Activated CD4-positive, alpha-beta memory T cell treated with anti-CD3 and anti-CD28 coated beads for 36 hours (primary cell): ENCODE measurements at regions of chr9 and their contacts with region 1.

Region 1: GRCh38 chr9:128034821-128035764 is 32.0 kb downstream of the NAIF1 start:
- DNase-seq: peak; percentile 75
- H3K4me3 Mint-ChIP-seq: peak overlapping the region; percentile 35
- H3K27ac Mint-ChIP-seq: peak overlapping the region; percentile 23
- H3K4me1 Mint-ChIP-seq: peaks cover 38% of the 10 kb centered on the region
- H3K27me3 Mint-ChIP-seq: peaks cover 2% of the 10 kb centered on the region

Region 2: DNA sequence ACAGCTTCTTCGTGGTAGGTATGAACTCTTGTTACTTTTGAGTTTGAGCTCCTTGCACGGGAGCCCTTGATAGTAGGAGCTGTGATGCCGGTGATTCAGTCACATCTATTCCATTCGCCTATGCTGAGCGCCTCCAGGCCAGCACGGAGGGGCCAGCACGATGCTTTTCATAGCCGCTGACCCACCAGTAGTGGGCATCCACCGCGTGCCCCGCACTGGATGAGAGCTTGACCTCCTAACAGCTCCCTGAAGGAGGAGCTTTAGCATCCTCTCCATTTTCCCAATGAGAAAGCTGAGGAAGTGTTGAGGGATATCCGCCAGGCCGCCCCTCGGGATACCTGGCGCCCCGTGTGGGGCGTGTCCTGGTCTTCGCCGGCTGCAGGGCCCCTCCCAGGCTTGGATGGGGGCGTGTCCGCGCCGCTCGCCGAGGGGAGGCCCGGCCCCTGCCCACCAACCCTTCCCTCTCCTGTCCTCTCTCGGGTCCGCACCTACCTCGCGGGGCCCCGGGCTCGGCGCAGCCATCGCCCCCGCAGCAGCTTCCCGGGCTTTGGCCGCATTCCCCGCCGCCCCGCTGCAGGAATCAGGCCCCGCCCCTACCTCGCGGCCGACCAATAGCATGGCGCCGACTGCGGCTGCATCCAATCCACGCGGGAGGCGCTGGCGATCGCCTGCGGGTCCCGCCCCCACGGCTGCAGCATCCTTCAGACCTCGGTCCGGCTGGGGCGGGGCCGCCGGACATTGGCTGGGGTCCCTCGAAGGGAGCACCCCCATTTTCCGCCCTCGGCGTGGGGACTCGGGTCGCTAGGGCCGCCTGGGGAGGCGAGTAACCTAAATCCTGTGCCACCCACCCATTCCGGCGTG is 104.6 kb before region 1 on chr9 and contains the start of gene PIP5KL1:
- CTCF ChIA-PET with region 1: interaction called, 347 read pairs
- POLR2A ChIA-PET with region 1: no interaction called
- intact Hi-C with region 1: no loop called
- DNase-seq: peak; percentile 79
- H3K4me3 Mint-ChIP-seq: peak within 1 kb of the TSS; percentile 48
- H3K27ac Mint-ChIP-seq: no peak within 1 kb of the TSS
- H3K4me1 Mint-ChIP-seq: peaks cover 32% of the 10 kb centered on the region
- H3K27me3 Mint-ChIP-seq: peaks cover 1% of the 10 kb centered on the region
- total RNA-seq, gene PIP5KL1: 0.94 to 2.9 TPM

Region 3: DNA sequence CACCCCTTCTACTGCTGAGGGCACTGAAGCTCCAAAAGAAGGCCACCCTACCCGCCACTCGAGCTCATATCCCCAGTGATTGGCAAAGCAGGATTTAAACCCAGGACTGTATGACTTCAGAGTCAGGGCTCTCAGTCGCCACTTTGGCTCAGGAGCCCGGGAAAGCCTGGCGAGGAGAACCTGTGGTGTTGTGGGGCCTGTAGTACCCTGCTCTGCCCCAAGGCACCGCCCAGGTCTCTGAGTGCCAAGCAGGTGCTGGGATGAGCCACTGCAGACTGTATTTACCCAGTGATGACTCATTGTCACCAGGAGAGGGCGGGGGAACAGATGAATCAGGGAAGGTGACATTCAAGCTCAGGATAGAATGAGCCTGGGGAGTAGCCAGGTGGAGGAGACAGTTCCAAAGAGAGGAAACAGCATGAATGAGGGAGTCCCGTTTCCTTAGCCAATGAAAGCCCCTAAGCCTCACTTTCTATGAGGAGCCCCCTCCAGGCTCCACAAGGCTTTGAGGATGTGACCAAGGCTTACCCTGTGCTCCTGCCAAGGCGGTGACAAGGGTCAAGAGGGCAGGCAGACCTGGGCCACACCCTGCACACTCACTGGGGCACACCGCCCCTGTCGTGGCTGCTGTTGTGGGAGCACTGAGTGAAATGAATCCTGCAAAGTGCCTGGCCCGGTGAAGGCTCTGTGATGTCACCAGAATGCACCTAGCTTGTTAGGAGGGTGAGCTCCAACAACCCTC is 79.6 kb before region 1 on chr9:
- CTCF ChIA-PET with region 1: interaction called, 142 read pairs
- POLR2A ChIA-PET with region 1: interaction called, 3 read pairs
- intact Hi-C with region 1: loop called (anchors 1 kb)
- DNase-seq: peak; percentile 95
- H3K4me3 Mint-ChIP-seq: peak overlapping the region; percentile 30
- H3K27ac Mint-ChIP-seq: peak overlapping the region; percentile 92
- H3K4me1 Mint-ChIP-seq: peaks cover 80% of the 10 kb centered on the region
- H3K27me3 Mint-ChIP-seq: no peaks in the 10 kb centered on the region

Region 4: GRCh38 chr9:127980706-127981558 is 54.2 kb before region 1 on chr9 and contains the start of gene EEIG1:
- CTCF ChIA-PET with region 1: interaction called, 76 read pairs
- POLR2A ChIA-PET with region 1: interaction called, 8 read pairs
- intact Hi-C with region 1: loop called (anchors 1 kb)
- DNase-seq: peak; percentile 98
- H3K4me3 Mint-ChIP-seq: peak within 1 kb of the TSS; percentile 96
- H3K27ac Mint-ChIP-seq: peak within 1 kb of the TSS; percentile 93
- H3K4me1 Mint-ChIP-seq: peaks cover 43% of the 10 kb centered on the region
- H3K27me3 Mint-ChIP-seq: no peaks in the 10 kb centered on the region
- total RNA-seq, gene EEIG1: 50.7 to 58.0 TPM

Region 5: GRCh38 chr9:128078504-128079434 is 43.7 kb after region 1 on chr9:
- CTCF ChIA-PET with region 1: interaction called, 15 read pairs
- POLR2A ChIA-PET with region 1: no interaction called
- intact Hi-C with region 1: no loop called
- DNase-seq: no peak
- H3K4me3 Mint-ChIP-seq: no peak overlapping the region
- H3K27ac Mint-ChIP-seq: peak overlapping the region; percentile 70
- H3K4me1 Mint-ChIP-seq: peaks cover 44% of the 10 kb centered on the region
- H3K27me3 Mint-ChIP-seq: no peaks in the 10 kb centered on the region

Region 6: DNA sequence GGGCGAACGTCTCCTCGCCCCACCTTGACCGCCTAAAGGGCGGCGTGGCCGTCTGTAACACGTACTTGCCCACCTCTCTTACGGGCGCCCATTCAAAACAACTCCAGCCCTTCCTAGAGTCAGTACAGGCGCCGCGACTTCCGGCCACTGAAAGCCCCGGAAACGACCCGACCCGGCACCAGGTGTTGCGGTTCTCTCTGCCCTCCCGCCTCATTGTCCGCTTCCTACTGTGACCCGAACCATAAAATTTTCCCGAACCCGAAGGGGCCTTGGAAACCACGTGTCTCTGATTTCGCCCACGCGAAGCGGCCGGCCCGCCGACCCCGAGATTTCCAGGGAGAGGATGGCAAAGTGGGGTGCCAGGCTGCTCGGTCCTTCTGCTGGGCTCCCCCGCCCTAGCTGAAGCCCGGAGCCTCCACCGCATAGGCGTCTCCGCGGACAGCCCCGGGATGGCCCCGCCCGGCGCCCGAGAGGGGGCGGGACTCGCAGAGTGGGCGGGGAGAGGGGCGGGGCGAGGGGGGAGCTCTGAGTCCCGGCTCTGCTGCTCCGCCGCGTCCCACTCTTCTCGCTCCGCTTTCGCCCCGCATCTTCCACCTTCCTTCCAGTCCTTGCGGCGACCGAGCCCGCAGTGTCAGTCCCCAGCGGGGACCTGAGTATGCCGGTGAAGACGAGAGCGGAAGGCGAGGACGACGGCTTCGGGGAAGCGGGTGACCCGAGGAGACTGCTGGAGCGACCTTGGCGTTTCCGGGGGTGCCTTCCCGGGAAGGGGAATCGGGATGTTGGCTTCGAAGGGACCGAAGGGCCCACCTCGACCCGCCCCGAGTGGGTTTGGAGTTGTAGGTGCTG is 93.1 kb after region 1 on chr9:
- CTCF ChIA-PET with region 1: interaction called, 11 read pairs
- POLR2A ChIA-PET with region 1: no interaction called
- intact Hi-C with region 1: no loop called
- DNase-seq: peak; percentile 88
- H3K4me3 Mint-ChIP-seq: peak overlapping the region; percentile 96
- H3K27ac Mint-ChIP-seq: peak overlapping the region; percentile 89
- H3K4me1 Mint-ChIP-seq: peaks cover 28% of the 10 kb centered on the region
- H3K27me3 Mint-ChIP-seq: no peaks in the 10 kb centered on the region